Activated T-helper 2 cell treated with anti-CD3 and anti-CD28 coated beads, Interferon-gamma antibody, Interleukin-2, Interleukin-4, amounts not matched to agents 10 μg/mL and 5 μg/mL and 100 μg/mL, durations not matched to agents 14 hours and 24 hours and 36 hours (primary cell): ENCODE measurements at regions of chr2 and their contacts with region 1.

Region 1: DNA sequence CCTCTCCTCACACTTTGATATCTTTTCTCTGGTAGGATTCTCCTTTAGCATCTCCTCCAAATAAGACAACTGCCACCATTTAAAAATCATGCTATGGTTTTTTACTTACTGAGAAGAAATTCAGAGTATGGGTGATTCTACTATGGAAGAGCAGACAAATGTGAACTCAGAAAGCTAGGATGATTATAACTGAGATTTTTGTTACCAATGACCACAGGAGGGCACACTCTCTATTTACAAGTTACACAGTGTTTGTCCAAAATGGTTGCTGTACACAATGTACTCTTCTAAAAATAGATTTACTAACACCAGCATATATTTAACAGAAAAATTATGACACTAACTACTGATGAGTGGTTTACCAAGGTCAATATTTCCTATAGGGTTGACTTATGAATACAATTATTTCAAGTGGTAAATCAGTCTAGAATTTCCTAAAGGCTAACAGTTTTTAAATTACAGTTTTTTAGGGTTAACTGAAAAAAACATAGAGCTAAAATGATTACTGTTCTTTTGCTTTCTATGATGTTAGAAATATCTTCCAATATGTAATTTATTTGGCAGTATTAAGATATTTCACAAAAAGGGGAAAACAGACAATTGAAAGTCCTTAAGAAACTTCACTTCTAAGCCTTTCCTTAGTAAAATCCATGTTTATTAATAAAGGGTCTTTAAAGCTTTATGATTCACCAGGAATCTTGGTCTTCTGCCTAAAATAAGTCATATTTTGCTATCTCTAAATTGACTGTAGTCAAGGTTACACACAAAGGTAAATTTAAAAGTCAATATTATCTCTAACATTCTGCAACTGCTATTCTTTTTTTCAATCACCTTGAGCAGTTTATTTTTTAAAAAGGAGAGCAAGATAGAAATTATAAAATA is 57.2 kb downstream of the MAP4K3 start:
- DNase-seq: no peak
- H3K4me3 Mint-ChIP-seq: no peak overlapping the region
- H3K27ac Mint-ChIP-seq: no peak overlapping the region
- H3K4me1 Mint-ChIP-seq: peaks cover 31% of the 10 kb centered on the region
- H3K27me3 Mint-ChIP-seq: no peaks in the 10 kb centered on the region

Region 2: GRCh38 chr2:39216346-39217191 is 163.3 kb before region 1 on chr2:
- intact Hi-C with region 1: loop called (anchors 2 kb)
- DNase-seq: peak; percentile 87
- H3K4me3 Mint-ChIP-seq: peak overlapping the region; percentile 38
- H3K27ac Mint-ChIP-seq: peak overlapping the region; percentile 88
- H3K4me1 Mint-ChIP-seq: peaks cover 64% of the 10 kb centered on the region
- H3K27me3 Mint-ChIP-seq: no peaks in the 10 kb centered on the region

Region 3: GRCh38 chr2:39356922-39357639 is 22.8 kb before region 1 on chr2:
- intact Hi-C with region 1: loop called (anchors 2 kb)
- DNase-seq: no peak
- H3K4me3 Mint-ChIP-seq: no peak overlapping the region
- H3K27ac Mint-ChIP-seq: peak overlapping the region; percentile 57
- H3K4me1 Mint-ChIP-seq: peaks cover 15% of the 10 kb centered on the region
- H3K27me3 Mint-ChIP-seq: no peaks in the 10 kb centered on the region

Region 4: GRCh38 chr2:39436592-39437510 is 57.0 kb after region 1 on chr2 and contains the start of gene MAP4K3:
- intact Hi-C with region 1: loop called (anchors 2 kb)
- DNase-seq: peak; percentile 66
- H3K4me3 Mint-ChIP-seq: peak within 1 kb of the TSS; percentile 89
- H3K27ac Mint-ChIP-seq: peak within 1 kb of the TSS; percentile 83
- H3K4me1 Mint-ChIP-seq: peaks cover 41% of the 10 kb centered on the region
- H3K27me3 Mint-ChIP-seq: no peaks in the 10 kb centered on the region
- total RNA-seq, gene MAP4K3: 19.3 and 22.7 TPM in 2 replicates

Region 5: GRCh38 chr2:39603436-39603835 is 223.6 kb after region 1 on chr2:
- intact Hi-C with region 1: loop called (anchors 5 kb)
- DNase-seq: no peak
- H3K4me3 Mint-ChIP-seq: no peak overlapping the region
- H3K27ac Mint-ChIP-seq: peak overlapping the region; percentile 37
- H3K4me1 Mint-ChIP-seq: peaks cover 15% of the 10 kb centered on the region
- H3K27me3 Mint-ChIP-seq: peaks cover 23% of the 10 kb centered on the region

Region 6: GRCh38 chr2:39772086-39772811 is 392.4 kb after region 1 on chr2:
- intact Hi-C with region 1: loop called (anchors 2 kb)
- DNase-seq: no peak
- H3K4me3 Mint-ChIP-seq: no peak overlapping the region
- H3K27ac Mint-ChIP-seq: peak overlapping the region; percentile 4
- H3K4me1 Mint-ChIP-seq: peaks cover 42% of the 10 kb centered on the region
- H3K27me3 Mint-ChIP-seq: no peaks in the 10 kb centered on the region